Common myeloid progenitor, CD34-positive (primary cell): ENCODE measurements at regions of chr10 and their contacts with region 1.

Region 1: GRCh38 chr10:96229568-96230030 is 41.8 kb downstream of the BLNK start:
- DNase-seq: peak; percentile 90 to 96 (median 95)
- H3K4me3 ChIP-seq: no peak overlapping the region
- H3K27ac ChIP-seq: no peak overlapping the region
- H3K4me1 ChIP-seq: peaks cover 0 to 4% (median 2%) of the 10 kb centered on the region in 4 experiments
- H3K27me3 ChIP-seq: no peaks in the 10 kb centered on the region

Region 2: DNA sequence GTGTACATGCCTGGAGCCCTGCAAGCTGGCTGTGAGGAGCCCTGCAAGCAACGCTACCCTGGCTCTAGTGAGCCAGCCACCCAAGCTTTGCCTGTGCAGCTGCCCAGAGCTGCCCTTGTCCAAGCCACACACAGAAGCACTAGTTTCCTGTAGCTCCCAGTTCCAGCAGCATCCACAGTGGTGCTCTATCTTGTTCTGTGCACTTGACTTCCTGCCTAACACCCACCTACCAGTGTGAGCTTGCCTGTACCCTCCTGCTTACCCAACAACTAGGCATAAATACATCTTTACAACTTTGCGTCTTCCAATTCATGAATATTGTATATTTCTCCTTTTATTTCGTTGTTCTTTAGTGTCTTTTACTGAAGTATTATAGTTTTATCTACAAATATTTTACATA is 131.7 kb before region 1 on chr10:
- CTCF ChIA-PET with region 1: no interaction called
- POLR2A ChIA-PET with region 1: no interaction called
- DNase-seq: no peak
- H3K4me3 ChIP-seq: no peak overlapping the region
- H3K27ac ChIP-seq: no peak overlapping the region
- H3K4me1 ChIP-seq: no peaks in the 10 kb centered on the region
- H3K27me3 ChIP-seq: peaks cover 3 to 75% (median 19%) of the 10 kb centered on the region in 5 experiments

Region 3: GRCh38 chr10:96205580-96205979 is 24.0 kb before region 1 on chr10:
- CTCF ChIA-PET with region 1: no interaction called
- POLR2A ChIA-PET with region 1: no interaction called
- DNase-seq: no peak
- H3K4me3 ChIP-seq: no peak overlapping the region
- H3K27ac ChIP-seq: no peak overlapping the region
- H3K4me1 ChIP-seq: no peaks in the 10 kb centered on the region
- H3K27me3 ChIP-seq: peaks cover 0 to 1% (median 0%) of the 10 kb centered on the region in 5 experiments

Region 4: GRCh38 chr10:96287392-96288105 is 58.0 kb after region 1 on chr10:
- CTCF ChIA-PET with region 1: interaction called, 253 read pairs
- POLR2A ChIA-PET with region 1: no interaction called
- DNase-seq: peak; percentile 30 to 82 (median 65)
- H3K4me3 ChIP-seq: peak overlapping the region in 2 of 7 experiments; percentile 31 to 47
- H3K27ac ChIP-seq: peak overlapping the region in 1 of 2 experiments; percentile 43
- H3K4me1 ChIP-seq: peaks cover 12 to 27% (median 15%) of the 10 kb centered on the region in 4 experiments
- H3K27me3 ChIP-seq: no peaks in the 10 kb centered on the region

Region 5: DNA sequence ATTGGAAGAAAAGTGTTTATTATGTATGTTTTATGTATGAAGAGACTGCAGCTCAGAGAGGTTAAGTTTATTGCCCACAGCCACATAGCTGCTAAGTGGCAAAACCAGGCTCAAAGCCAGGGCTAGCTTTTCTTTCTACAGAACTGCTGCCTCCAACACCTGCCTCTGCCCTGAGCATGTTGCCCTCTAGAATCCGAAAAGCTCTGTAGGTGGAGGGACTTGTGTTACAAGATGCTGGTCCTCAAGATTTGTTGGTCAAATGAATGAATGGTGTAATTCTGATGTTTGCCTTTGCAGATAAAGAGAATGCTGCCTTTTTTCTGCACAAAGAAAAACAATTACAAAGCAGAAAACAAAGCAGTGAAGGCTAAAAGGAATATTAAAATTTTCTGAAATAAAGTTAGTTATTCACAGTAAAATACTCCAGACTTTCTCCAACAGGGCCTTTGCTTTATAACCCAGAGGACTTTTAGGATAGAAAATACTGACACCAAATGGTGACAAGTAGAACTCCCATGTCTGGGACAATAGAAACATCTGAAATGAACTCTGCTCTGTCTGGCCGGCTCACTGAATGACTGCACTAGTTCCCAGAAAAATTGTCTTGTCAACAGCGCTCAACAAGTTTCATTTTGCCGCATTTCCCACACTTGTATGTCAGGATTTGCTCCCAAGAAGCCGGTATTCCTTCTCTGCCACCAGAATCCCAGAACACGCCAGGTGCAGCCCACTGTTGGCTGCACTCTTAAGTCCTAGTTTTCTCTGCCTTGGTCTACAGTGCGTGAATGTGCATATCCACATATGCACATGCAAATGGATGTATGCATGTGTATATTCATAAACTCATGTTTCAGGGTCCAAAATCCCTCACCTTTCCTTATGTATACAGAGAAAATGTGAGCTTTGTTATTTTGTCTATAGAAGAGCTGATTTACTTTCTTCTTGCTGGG is 63.6 kb after region 1 on chr10:
- CTCF ChIA-PET with region 1: interaction called, 253 read pairs
- POLR2A ChIA-PET with region 1: no interaction called
- DNase-seq: peak; percentile 60 to 72 (median 72)
- H3K4me3 ChIP-seq: peak overlapping the region in 1 of 7 experiments; percentile 17
- H3K27ac ChIP-seq: no peak overlapping the region
- H3K4me1 ChIP-seq: peaks cover 2 to 44% (median 23%) of the 10 kb centered on the region in 4 experiments
- H3K27me3 ChIP-seq: peaks cover 0 to 2% (median 0%) of the 10 kb centered on the region in 5 experiments

Region 6: GRCh38 chr10:96334616-96335526 is 105.3 kb after region 1 on chr10:
- CTCF ChIA-PET with region 1: interaction called, 43 read pairs
- POLR2A ChIA-PET with region 1: interaction called, 3 read pairs
- DNase-seq: peak; percentile 11 to 74 (median 56)
- H3K4me3 ChIP-seq: no peak overlapping the region
- H3K27ac ChIP-seq: no peak overlapping the region
- H3K4me1 ChIP-seq: peaks cover 0 to 30% (median 9%) of the 10 kb centered on the region in 4 experiments
- H3K27me3 ChIP-seq: no peaks in the 10 kb centered on the region